Activated CD4-positive, alpha-beta memory T cell treated with anti-CD3 and anti-CD28 coated beads, Interleukin-2, amount 10 ng/mL, durations not matched to agents 7 days and 5 days (primary cell): ENCODE measurements at regions of chr17 and their contacts with region 1.

Region 1: DNA sequence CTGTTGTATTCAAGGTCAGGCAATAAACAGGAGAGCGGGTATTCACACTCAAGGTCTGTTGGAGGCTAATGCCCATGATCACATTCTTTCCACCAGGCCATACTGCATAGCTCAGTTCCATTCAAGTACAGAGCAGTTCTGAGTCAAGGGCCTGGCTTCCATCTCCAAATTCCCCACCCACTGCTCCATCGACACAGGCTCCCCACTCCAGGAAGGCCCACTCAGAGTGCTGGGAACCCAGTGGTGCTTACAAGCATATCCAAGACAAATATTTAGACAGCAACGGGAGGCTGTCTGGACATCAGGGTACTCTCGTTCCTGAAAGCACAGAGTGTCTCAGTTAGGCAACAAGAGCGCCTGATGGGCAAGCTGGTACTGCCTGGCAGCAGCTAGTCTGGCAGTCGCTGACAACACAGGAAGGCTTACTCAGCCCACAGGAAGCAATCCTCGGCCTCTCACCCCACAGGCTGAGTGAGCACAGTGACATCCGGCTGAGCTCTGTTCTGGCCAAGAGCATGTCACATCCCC is 40.9 kb downstream of the RFFL start:
- DNase-seq: peak; percentile 86
- H3K4me3 Mint-ChIP-seq: peak overlapping the region; percentile 70
- H3K27ac Mint-ChIP-seq: peak overlapping the region; percentile 98
- H3K4me1 Mint-ChIP-seq: peaks cover 60% of the 10 kb centered on the region
- H3K27me3 Mint-ChIP-seq: no peaks in the 10 kb centered on the region

Region 2: GRCh38 chr17:34980681-34981537 is 41.7 kb before region 1 on chr17:
- CTCF ChIA-PET with region 1: no interaction called
- POLR2A ChIA-PET with region 1: interaction called, 25 read pairs
- DNase-seq: peak; percentile 81
- H3K4me3 Mint-ChIP-seq: peak overlapping the region; percentile 79
- H3K27ac Mint-ChIP-seq: peak overlapping the region; percentile 93
- H3K4me1 Mint-ChIP-seq: peaks cover 54% of the 10 kb centered on the region
- H3K27me3 Mint-ChIP-seq: no peaks in the 10 kb centered on the region

Region 3: DNA sequence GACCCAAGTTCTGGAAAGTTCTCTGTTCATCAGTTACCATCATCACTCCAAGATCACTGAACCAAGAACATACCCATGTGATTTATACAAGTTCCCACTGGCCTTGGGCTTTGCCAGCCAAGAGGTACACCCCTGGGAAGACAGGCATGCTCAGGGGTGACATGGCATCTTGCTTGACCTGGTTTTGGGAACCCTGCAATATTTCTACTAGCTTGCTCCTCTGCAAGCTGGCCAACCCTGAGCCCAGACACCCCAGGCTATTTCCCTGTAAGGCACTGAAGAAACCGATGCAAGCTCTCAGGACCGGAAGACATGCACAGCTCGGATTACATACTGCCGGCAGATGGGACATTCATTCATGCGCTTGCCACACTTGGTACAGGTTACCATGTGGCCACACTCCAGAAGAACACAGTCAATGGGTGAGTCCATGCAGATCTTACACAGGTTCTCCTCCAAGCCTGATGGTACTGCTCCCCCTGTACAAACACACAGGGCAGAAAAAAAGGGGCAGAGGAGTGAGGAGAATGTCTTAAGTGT is 10.9 kb before region 1 on chr17:
- CTCF ChIA-PET with region 1: interaction called, 6 read pairs
- POLR2A ChIA-PET with region 1: interaction called, 24 read pairs
- DNase-seq: no peak
- H3K4me3 Mint-ChIP-seq: no peak overlapping the region
- H3K27ac Mint-ChIP-seq: no peak overlapping the region
- H3K4me1 Mint-ChIP-seq: no peaks in the 10 kb centered on the region
- H3K27me3 Mint-ChIP-seq: no peaks in the 10 kb centered on the region

Region 4: DNA sequence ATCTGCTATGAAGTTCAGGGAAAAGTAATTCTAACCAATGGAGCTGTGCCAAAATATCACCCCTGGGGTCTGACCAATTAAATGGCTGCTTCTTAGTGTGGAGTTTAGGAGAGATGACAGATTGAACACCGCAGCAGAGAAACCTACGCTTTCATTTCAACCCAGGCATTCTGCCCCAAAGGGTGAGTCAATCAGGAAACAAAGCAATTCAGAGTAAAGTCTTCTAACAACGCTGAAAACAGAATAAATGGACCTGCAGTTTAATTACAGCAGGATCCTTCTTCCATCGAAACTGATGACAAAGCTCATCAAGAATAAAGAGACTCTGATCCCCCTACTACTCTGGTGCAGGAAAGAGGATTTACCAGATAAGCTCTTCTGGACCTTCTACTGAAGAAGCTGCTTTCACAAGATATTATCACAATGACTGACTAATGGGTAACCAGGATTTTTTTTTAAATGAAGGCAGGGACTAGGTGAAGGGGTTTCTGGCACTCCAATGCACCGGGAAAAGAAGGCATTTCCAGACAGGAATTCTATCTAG is 24.2 kb after region 1 on chr17:
- CTCF ChIA-PET with region 1: interaction called, 15 read pairs
- POLR2A ChIA-PET with region 1: interaction called, 51 read pairs
- DNase-seq: peak; percentile 77
- H3K4me3 Mint-ChIP-seq: peak overlapping the region; percentile 70
- H3K27ac Mint-ChIP-seq: peak overlapping the region; percentile 93
- H3K4me1 Mint-ChIP-seq: peaks cover 55% of the 10 kb centered on the region
- H3K27me3 Mint-ChIP-seq: no peaks in the 10 kb centered on the region

Region 5: DNA sequence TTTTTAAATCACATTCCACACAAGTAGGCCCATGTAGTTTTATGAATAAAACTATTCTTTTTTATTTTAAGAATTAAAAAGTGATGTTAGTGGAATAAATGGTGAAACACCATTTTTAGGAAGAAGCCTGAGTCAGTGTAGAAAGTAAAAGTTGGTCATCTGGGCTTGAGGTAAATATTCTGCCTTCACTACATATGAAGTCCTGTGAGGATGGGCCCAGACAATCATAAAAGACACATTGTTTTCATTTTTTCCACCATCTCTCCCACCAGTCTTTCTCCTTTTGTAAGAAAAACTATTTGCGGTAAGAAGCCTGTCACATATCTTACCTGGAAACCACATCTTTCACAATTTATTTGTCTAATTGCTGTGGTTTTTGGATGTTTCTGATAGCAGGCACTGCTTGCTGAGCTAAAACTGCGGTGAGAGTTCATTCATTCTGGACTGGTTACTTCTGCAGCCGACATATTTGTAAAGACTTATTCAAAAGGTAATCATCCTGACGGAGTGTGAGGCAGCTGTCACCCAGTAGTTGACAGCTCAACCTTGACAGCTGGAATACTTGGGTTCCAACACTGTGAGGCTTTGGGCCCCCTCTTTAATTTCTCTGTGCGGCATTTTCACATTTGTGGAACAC is 51.5 kb after region 1 on chr17:
- CTCF ChIA-PET with region 1: interaction called, 3 read pairs
- POLR2A ChIA-PET with region 1: interaction called, 56 read pairs
- DNase-seq: no peak
- H3K4me3 Mint-ChIP-seq: peak overlapping the region; percentile 24
- H3K27ac Mint-ChIP-seq: peak overlapping the region; percentile 55
- H3K4me1 Mint-ChIP-seq: peaks cover 67% of the 10 kb centered on the region
- H3K27me3 Mint-ChIP-seq: no peaks in the 10 kb centered on the region

Region 6: DNA sequence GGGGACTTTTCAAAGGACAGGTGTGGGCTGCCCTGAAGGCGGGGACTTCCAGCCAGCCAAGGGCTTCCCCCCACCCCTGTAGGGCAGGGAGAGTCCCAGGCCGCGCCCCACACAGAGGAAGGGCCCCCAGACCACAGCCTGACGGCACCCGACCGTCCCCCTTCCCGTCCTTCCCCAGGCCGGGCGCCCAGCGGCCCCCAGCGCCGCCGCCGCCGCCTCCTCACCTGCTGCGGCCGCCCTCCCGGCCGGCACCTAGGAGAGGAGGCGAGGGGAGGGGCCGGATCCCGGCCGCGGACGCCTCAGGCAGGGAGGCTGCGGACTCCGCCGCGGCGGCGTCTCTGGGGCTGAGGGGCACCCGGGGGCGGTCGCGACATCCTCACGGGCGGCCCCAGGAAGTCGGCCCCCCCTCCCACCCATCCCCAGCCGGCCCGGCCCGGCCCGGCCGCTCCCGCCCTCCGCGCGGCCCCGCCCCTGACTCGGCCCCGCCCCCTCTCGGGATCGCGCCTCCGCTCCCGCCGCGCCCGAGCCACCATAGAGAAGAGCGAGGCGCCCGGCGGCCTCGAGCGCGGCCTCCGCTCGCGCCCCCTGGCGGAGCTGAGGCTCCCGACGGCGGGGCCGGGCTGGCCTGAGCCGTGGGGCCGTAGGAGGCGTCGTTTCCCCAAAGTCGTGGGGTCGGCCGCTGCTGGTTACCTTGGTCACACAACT is 66.4 kb after region 1 on chr17:
- CTCF ChIA-PET with region 1: interaction called, 39 read pairs
- POLR2A ChIA-PET with region 1: interaction called, 56 read pairs
- DNase-seq: peak; percentile 93
- H3K4me3 Mint-ChIP-seq: peak overlapping the region; percentile 89
- H3K27ac Mint-ChIP-seq: peak overlapping the region; percentile 90
- H3K4me1 Mint-ChIP-seq: peaks cover 54% of the 10 kb centered on the region
- H3K27me3 Mint-ChIP-seq: no peaks in the 10 kb centered on the region